Activated naive CD4-positive, alpha-beta T cell treated with anti-CD3 and anti-CD28 coated beads for 36 hours (primary cell): ENCODE measurements at regions of chr22 and their contacts with region 1.

Region 1: GRCh38 chr22:43346521-43346929 is 3.4 kb upstream of the SCUBE1 start:
- DNase-seq: peak; percentile 76
- H3K4me3 Mint-ChIP-seq: no peak overlapping the region
- H3K27ac Mint-ChIP-seq: no peak overlapping the region
- H3K4me1 Mint-ChIP-seq: peaks cover 14% of the 10 kb centered on the region
- H3K27me3 Mint-ChIP-seq: peaks cover 46% of the 10 kb centered on the region

Region 2: DNA sequence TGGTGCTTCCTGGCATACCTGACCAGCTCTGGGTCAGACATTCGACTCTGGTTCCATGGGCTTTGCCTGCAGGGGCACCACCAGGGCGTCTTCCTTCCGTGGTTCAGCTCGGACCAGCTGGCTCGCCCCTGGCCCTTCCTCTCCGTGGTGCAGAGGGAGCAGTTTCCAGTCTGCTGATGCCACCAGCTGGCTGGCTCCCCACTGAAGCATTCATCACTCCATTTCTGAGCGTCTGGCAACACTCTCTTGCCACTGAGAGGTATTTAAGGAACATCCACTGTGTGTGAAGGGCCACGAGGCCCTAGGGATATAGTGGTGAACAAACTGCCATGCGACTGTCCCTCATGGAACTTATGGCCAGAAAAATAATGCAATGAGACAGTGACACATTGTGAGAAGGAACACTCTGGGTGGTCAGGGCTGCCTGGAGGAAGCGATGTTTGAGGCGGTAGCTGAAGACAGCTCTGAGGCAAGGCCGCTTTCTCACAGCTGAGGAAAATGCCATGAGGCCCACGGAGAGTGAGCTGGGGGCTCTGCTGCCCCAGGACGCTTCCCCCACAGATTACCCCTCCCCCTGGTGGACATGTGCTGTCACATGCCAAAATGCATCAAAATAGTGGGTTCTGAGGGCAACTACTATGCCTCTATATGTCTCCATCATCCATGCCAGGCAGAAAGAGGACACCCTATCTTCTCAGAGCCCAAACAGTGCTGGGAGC is 444.6 kb before region 1 on chr22:
- CTCF ChIA-PET with region 1: no interaction called
- intact Hi-C with region 1: no loop called
- DNase-seq: no peak
- H3K4me3 Mint-ChIP-seq: no peak overlapping the region
- H3K27ac Mint-ChIP-seq: no peak overlapping the region
- H3K4me1 Mint-ChIP-seq: peaks cover 7% of the 10 kb centered on the region
- H3K27me3 Mint-ChIP-seq: no peaks in the 10 kb centered on the region

Region 3: DNA sequence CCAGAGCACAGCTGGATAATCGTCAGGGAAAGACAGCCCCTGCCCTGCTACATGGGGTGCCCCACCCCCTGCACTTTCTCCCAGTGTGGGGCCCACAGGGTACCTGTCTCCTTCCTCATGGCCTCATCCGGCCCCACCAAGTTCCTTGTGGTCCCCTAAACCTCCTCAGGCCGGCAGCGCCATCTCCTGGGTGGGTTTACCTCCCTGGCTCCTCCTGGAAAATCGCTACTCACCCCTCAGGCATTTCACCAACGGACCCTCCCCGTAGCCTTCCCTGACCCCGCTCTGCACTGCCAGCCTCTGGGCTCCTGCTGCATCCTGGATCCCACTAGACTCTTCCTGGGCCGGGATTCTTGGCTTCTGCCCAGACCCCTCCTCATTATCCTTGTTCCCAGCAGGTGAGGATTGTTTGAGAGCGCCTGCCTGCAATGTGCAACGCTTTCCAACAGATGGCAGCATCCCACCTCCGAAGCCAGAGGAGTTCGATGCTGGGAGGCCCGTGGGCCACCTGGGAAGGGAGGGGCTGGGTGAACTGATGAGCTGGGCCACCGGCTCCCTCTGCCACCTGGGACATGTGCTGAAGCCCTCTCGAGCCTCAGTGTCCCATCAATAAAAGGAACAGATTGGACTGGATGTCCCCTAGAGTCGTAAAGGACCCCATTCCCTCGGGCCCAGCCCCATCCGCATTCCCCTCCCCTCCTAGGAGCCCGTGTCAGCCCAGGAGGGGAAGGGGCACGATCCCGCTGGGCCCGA is 115.4 kb before region 1 on chr22:
- CTCF ChIA-PET with region 1: interaction called, 54 read pairs
- intact Hi-C with region 1: loop called (anchors 1 kb)
- DNase-seq: peak; percentile 74
- H3K4me3 Mint-ChIP-seq: no peak overlapping the region
- H3K27ac Mint-ChIP-seq: no peak overlapping the region
- H3K4me1 Mint-ChIP-seq: peaks cover 2% of the 10 kb centered on the region
- H3K27me3 Mint-ChIP-seq: no peaks in the 10 kb centered on the region

Region 4: DNA sequence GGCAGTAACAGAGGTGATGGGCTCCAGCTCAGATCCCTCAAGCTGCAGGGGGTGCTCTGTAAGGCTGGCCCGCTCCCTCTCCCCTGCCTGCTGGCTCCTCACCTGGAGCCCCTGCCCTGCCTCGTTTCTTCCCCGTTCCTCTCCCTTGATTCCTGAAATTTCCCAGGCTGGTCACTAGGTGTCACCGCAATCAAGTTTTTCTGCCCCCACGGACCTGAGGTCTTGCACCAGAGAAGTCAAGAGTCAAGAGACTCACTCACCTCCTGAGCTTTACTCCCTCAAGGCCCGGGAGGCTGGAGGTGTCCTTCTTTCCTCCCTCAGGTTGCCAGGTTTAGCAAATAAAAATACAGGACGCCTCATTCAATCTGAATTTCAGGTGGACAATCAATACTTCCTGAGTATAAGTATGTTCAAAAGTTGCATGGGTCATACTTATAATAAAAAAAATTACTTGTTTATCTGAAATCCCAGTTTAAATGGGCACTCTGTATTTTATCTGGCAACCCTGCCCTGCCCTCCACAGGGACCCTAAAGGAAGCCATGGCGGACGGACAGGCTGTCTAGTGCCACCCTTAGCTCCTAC is 72.5 kb before region 1 on chr22:
- CTCF ChIA-PET with region 1: interaction called, 42 read pairs
- intact Hi-C with region 1: loop called (anchors 1 kb)
- DNase-seq: peak; percentile 62
- H3K4me3 Mint-ChIP-seq: no peak overlapping the region
- H3K27ac Mint-ChIP-seq: no peak overlapping the region
- H3K4me1 Mint-ChIP-seq: no peaks in the 10 kb centered on the region
- H3K27me3 Mint-ChIP-seq: no peaks in the 10 kb centered on the region

Region 5: GRCh38 chr22:43356881-43357280 is 10.4 kb after region 1 on chr22:
- CTCF ChIA-PET with region 1: interaction called, 15 read pairs
- intact Hi-C with region 1: no loop called
- DNase-seq: no peak
- H3K4me3 Mint-ChIP-seq: no peak overlapping the region
- H3K27ac Mint-ChIP-seq: no peak overlapping the region
- H3K4me1 Mint-ChIP-seq: no peaks in the 10 kb centered on the region
- H3K27me3 Mint-ChIP-seq: peaks cover 6% of the 10 kb centered on the region